Panc1 (cell line): ENCODE measurements at regions of chr2 and their contacts with region 1.

Region 1: GRCh38 chr2:55693181-55694134 is at the start of gene PNPT1:
- DNase-seq: peak; percentile 93
- ATAC-seq: peak; percentile 100
- H3K4me3 ChIP-seq: peak within 1 kb of the TSS; percentile 95 to 98
- H3K27ac ChIP-seq: peak within 1 kb of the TSS; percentile 95
- H3K4me1 ChIP-seq: peaks cover 2% of the 10 kb centered on the region; the same call in 1 of the 2 replicates
- H3K27me3 ChIP-seq: peaks cover 1% of the 10 kb centered on the region; the same call in 1 of the 2 replicates
- CTCF ChIP-seq: no peak
- total RNA-seq, gene PNPT1: 50.1 TPM

Region 2: GRCh38 chr2:55732854-55733253 is 39.4 kb after region 1 on chr2:
- CTCF ChIA-PET with region 1: no interaction called
- POLR2A ChIA-PET with region 1: no interaction called
- in situ Hi-C with region 1: no loop called
- intact Hi-C with region 1: no loop called
- DNase-seq: no peak
- ATAC-seq: no peak
- H3K4me3 ChIP-seq: no peak overlapping the region
- H3K27ac ChIP-seq: no peak overlapping the region
- H3K4me1 ChIP-seq: no peaks in the 10 kb centered on the region
- H3K27me3 ChIP-seq: peaks cover 3% of the 10 kb centered on the region
- CTCF ChIP-seq: no peak

Region 3: DNA sequence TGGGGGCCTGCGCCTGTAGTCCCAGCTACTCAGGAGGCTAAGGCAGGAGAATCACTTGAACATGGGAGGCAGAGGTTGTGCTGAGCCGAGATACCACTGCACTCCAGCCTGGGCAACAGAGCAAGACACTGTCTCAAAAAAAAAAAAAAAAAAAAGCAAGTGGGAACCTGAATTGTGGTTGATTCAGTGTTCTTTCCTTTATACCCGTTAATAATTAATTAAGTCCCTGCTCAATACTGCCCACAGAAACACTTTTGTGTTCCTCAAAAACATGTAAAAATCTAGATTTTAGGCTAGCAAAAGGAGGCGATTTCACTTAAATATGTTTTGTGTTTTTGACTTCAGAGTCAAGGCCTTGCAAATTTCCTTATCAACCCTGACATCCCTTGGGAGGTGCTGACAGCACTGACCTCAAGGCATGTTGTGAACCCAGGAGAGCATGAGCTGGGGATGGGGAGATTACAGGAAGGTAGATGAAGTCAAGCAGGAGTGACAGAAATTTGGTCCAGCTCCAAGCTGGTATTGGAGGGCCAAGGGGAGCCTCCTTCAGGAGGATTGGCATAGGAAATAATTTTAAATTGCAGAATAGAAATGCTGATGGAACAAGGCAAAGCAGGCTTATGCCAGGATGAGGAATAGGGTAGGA is 89.2 kb after region 1 on chr2:
- CTCF ChIA-PET with region 1: no interaction called
- POLR2A ChIA-PET with region 1: interaction called, 12 read pairs
- in situ Hi-C with region 1: no loop called
- intact Hi-C with region 1: no loop called
- DNase-seq: no peak
- ATAC-seq: no peak
- H3K4me3 ChIP-seq: no peak overlapping the region
- H3K27ac ChIP-seq: no peak overlapping the region
- H3K4me1 ChIP-seq: peaks cover 18% of the 10 kb centered on the region
- H3K27me3 ChIP-seq: no peaks in the 10 kb centered on the region
- CTCF ChIP-seq: no peak